ENCODE measurements at regions of chr16 and their contacts with region 1.

Region 1: DNA sequence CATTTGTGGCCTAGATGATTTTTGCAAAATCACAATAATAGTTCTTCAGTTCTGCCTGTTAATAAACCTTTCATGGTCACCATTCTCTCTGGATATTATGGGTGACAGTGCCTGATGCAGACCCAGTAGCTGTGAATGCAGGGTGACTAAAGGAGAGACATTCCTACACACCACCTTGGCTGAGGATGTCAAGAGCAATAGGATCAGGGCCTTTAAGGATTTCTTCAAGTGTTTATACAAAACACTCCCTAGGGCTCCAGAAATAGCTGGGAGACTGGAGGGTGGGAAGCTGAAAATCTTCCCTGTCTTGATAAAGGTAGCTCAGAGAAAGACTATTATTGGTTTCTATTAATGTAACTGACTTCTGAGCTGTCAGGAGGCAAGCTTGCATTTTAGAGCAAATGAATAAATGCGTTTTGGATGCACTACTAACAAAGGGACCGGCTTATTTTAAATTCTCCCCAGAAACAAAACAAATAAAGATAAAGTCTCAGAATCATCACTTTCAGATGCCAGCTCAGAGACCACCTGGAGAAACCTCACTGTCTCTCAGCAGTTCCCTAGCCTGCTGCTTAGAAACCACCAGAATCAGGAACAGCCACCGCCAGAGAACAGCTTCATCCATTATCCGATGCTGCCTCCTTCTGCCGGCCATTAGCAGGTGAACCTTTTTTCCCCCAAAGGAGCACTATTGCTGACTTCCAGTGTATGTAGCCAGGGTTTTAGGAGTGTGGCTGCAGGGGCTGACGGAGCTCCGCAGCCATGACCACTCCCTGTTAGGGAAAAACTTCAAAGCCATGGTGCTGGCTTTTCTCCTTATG is 171.4 kb upstream of the DYNLRB2 start:
- DNase-seq: peak; percentile 27
- H3K4me3 Mint-ChIP-seq: no peak overlapping the region
- H3K27ac Mint-ChIP-seq: no peak overlapping the region
- H3K4me1 Mint-ChIP-seq: no peaks in the 10 kb centered on the region
- H3K27me3 Mint-ChIP-seq: no peaks in the 10 kb centered on the region
- CTCF ChIP-seq: peak; percentile 42

Region 2: DNA sequence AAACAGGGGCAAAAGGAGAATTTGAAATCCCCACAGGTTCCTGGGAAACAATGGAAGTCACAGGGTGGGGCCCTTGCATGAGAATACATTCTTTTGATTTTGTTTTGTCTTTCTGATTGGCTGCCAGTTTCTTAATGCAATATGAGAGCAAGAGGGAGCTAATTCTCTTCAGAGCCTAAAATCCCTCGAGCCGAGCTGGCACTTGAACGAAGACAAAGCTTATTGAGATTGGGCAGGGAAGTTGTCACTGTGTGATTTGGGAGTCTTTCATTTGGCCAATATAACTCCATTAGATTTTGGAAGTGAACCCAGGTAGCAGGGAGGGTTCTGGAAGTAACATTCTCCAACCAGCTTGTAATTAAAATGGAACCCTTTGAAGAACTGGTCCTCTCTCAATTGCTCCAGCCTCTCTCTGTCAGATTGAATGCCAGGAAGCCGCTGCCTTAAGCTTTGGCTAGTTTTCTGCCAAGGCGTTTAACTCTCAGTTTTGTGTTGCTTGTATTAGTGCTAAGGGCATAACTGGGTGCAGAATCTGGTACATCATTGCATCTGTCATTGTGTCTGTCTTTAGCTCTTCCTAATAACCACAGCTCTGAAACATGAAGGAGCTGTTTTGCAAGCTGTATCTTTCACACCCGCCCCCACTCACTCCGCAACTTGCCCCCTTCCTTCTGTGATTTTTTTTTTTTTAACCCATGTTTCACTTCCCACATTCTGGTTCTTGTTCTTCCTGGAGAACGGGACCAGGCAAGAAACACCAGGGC is 1040.8 kb before region 1 on chr16:
- CTCF ChIA-PET with region 1: no interaction called
- POLR2A ChIA-PET with region 1: no interaction called
- intact Hi-C with region 1: loop called (anchors 5 kb)
- DNase-seq: peak; percentile 34
- H3K4me3 Mint-ChIP-seq: no peak overlapping the region
- H3K27ac Mint-ChIP-seq: no peak overlapping the region
- H3K4me1 Mint-ChIP-seq: peaks cover 8% of the 10 kb centered on the region
- H3K27me3 Mint-ChIP-seq: peaks cover 47% of the 10 kb centered on the region
- CTCF ChIP-seq: no peak

Region 3: GRCh38 chr16:79997257-79997656 is 372.1 kb before region 1 on chr16:
- CTCF ChIA-PET with region 1: interaction called, 3 read pairs
- POLR2A ChIA-PET with region 1: no interaction called
- intact Hi-C with region 1: loop called (anchors 10 kb)
- DNase-seq: peak; percentile 46
- H3K4me3 Mint-ChIP-seq: no peak overlapping the region
- H3K27ac Mint-ChIP-seq: no peak overlapping the region
- H3K4me1 Mint-ChIP-seq: peaks cover 11% of the 10 kb centered on the region
- H3K27me3 Mint-ChIP-seq: no peaks in the 10 kb centered on the region
- CTCF ChIP-seq: peak; percentile 37

Region 4: DNA sequence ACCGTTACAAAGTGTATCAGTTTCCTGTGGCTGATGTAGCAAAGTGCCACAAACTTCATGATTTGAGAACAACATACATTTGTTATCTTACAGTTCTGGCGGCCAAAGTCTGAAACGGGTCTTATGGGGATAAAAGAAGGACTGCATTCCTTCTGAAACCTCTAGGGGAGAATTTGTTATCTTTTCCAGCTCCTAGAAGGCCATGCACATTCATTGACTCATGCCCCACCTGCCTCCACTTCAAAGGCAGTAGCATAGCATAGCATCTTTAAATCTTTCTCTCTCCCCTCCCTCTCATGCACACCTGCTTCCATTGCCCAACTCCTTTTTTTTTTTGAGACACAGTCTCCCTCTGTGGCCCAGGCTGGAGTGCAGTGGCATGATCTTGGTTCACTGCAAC is 19.3 kb before region 1 on chr16:
- CTCF ChIA-PET with region 1: no interaction called
- POLR2A ChIA-PET with region 1: no interaction called
- intact Hi-C with region 1: no loop called
- DNase-seq: no peak
- H3K4me3 Mint-ChIP-seq: no peak overlapping the region
- H3K27ac Mint-ChIP-seq: no peak overlapping the region
- H3K4me1 Mint-ChIP-seq: peaks cover 10% of the 10 kb centered on the region
- H3K27me3 Mint-ChIP-seq: no peaks in the 10 kb centered on the region
- CTCF ChIP-seq: no peak